Sigmoid colon (tissue), 7 donors: ENCODE measurements at regions of chrX and their contacts with region 1.

Region 1: GRCh38 chrX:72018277-72019112 is 107.8 kb downstream of the NHSL2 start:
- DNase-seq: peak; percentile 94
- H3K4me3 ChIP-seq: peak overlapping the region in 3 of 4 donors; percentile 24 to 40 (median 25)
- H3K27ac ChIP-seq: peak overlapping the region; percentile 72 to 82 (median 78)
- H3K4me1 ChIP-seq: peaks cover 0 to 31% (median 18%) of the 10 kb centered on the region in 4 donors
- H3K27me3 ChIP-seq: no peaks in the 10 kb centered on the region
- CTCF ChIP-seq: peak in 2 of 4 experiments; percentile 24 to 74
- EP300 ChIP-seq: peak in 1 of 4 donors; percentile 25
- POLR2A ChIP-seq: no peak

Region 2: GRCh38 chrX:72126539-72127140 is 108.1 kb after region 1 on chrX:
- intact Hi-C with region 1: loop called (anchors 1 kb)
- DNase-seq: peak; percentile 92
- H3K4me3 ChIP-seq: no peak overlapping the region
- H3K27ac ChIP-seq: peak overlapping the region; percentile 70 to 79 (median 76)
- H3K4me1 ChIP-seq: peaks cover 0 to 65% (median 45%) of the 10 kb centered on the region in 4 donors
- H3K27me3 ChIP-seq: peaks cover 0 to 3% (median 0%) of the 10 kb centered on the region in 3 donors
- CTCF ChIP-seq: peak; percentile 57 to 76 (median 72)
- EP300 ChIP-seq: no peak
- POLR2A ChIP-seq: no peak

Region 3: DNA sequence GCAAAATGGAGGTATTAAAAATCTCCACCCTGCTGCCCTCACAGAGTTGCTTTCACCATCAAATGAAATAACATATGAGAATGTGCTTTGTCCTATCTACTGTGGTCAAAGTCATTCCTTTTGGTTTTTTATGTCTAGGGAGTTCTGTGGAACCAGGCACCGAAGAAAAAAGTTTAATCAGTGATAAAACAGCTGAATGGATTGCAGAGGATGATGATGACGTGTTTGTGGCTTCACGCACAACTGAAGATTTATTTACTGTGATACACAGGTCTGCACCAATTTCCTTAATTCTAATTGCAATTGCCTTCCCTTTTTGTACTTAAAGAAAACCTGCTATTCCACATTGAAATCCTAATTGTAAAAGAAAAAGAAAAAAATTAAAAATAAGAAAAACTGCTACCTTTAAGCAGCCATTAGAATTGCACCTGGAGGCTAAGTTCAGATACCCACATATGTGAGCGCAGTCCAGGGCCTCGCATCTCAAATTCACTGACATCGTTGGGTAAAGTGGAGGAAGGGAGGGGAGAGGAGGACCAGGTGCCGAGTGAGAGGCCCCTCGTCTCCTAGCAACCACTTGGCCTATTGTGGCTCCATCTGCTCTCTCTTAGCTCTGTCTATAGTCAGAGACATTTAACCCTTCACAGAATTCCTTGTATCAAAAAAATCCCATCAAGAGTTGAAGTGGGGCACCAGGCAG is 123.7 kb after region 1 on chrX:
- intact Hi-C with region 1: no loop called
- DNase-seq: no peak
- H3K4me3 ChIP-seq: no peak overlapping the region
- H3K27ac ChIP-seq: peak overlapping the region in 1 of 4 donors; percentile 50
- H3K4me1 ChIP-seq: peaks cover 0 to 10% (median 0%) of the 10 kb centered on the region in 4 donors
- H3K27me3 ChIP-seq: no peaks in the 10 kb centered on the region
- CTCF ChIP-seq: no peak
- EP300 ChIP-seq: no peak
- POLR2A ChIP-seq: no peak